BJ (cell line): ENCODE measurements at regions of chr6 and their contacts with region 1.

Region 1: DNA sequence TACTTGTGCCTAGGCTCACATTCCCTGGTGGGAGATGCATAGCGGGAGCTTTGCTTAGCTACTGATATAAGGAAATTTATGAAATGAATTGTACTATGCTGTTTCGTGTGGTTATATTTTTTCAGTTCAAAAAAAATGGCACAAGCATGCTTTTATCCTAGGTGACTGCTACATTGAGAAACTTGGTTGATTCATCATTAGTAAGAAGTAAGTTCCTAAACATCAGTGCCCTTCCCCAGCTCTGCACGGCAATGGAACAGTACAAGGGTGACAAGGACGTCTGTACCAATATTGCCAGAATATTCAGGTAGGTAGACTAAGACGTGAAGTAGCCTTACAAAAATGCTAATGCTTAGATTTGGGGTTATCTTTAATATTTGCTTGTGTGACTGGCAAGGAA is 79.7 kb downstream of the ARMC2 start:
- DNase-seq: no peak
- H3K4me3 ChIP-seq: no peak overlapping the region
- H3K27me3 ChIP-seq: no peaks in the 10 kb centered on the region
- CTCF ChIP-seq: no peak

Region 2: GRCh38 chr6:108914235-108915022 is 13.5 kb before region 1 on chr6:
- CTCF ChIA-PET with region 1: interaction called, 3 read pairs
- POLR2A ChIA-PET with region 1: interaction called, 11 read pairs
- DNase-seq: no peak
- H3K4me3 ChIP-seq: no peak overlapping the region
- H3K27me3 ChIP-seq: peaks cover 2% of the 10 kb centered on the region; the same call in 1 of the 2 replicates
- CTCF ChIP-seq: peak; percentile 47

Region 3: DNA sequence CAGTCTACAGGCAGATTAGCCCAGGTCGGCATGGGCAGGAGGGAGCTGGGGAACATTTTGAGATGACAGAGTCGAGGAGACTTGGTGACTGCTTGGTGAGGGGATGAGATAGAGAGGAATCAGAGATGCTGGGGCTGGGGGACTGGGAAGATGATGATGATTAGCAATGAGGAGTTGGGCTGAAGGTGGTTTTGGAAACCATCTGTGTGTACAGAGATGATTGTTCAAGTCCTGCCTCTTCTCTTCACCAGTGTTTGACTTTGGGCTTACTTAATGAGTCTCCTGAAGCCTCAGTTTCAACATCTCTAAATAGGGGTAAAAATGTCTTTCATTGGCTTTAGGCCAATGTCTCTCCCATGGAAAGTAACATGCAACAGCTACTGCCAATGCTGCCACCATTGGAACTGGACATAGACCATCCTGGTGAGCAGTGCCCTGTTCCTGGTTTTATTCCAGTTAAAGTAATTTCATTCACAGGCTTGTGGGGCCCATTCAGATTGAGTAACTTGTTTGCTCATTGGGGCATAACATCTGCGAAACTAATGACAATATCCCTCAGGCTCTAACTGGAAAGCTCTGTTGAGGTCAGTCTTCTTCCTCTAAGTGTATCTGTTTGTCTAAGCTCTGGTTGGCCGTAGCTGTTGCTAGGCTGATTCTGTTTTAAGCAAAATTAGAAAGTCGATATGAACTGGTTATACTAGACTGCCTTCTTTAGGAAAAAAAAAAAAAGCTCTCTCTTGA is 19.4 kb after region 1 on chr6:
- CTCF ChIA-PET with region 1: interaction called, 3 read pairs
- POLR2A ChIA-PET with region 1: interaction called, 10 read pairs
- DNase-seq: peak; percentile 75
- H3K4me3 ChIP-seq: no peak overlapping the region
- H3K27me3 ChIP-seq: no peaks in the 10 kb centered on the region
- CTCF ChIP-seq: no peak

Region 4: GRCh38 chr6:109082188-109082577 is 154.3 kb after region 1 on chr6:
- CTCF ChIA-PET with region 1: no interaction called
- POLR2A ChIA-PET with region 1: no interaction called
- DNase-seq: no peak
- H3K4me3 ChIP-seq: no peak overlapping the region
- H3K27me3 ChIP-seq: no peaks in the 10 kb centered on the region
- CTCF ChIP-seq: no peak